ENCODE measurements at regions of chr7 and their contacts with region 1.

Region 1: GRCh38 chr7:76314042-76314721 is 11.7 kb downstream of the HSPB1 start:
- DNase-seq: peak; percentile 99
- ATAC-seq: peak; percentile 57
- H3K4me3 Mint-ChIP-seq: peak overlapping the region; percentile 25
- H3K27ac Mint-ChIP-seq: peak overlapping the region; percentile 82
- H3K4me1 Mint-ChIP-seq: peaks cover 18% of the 10 kb centered on the region
- H3K27me3 Mint-ChIP-seq: no peaks in the 10 kb centered on the region

Region 2: DNA sequence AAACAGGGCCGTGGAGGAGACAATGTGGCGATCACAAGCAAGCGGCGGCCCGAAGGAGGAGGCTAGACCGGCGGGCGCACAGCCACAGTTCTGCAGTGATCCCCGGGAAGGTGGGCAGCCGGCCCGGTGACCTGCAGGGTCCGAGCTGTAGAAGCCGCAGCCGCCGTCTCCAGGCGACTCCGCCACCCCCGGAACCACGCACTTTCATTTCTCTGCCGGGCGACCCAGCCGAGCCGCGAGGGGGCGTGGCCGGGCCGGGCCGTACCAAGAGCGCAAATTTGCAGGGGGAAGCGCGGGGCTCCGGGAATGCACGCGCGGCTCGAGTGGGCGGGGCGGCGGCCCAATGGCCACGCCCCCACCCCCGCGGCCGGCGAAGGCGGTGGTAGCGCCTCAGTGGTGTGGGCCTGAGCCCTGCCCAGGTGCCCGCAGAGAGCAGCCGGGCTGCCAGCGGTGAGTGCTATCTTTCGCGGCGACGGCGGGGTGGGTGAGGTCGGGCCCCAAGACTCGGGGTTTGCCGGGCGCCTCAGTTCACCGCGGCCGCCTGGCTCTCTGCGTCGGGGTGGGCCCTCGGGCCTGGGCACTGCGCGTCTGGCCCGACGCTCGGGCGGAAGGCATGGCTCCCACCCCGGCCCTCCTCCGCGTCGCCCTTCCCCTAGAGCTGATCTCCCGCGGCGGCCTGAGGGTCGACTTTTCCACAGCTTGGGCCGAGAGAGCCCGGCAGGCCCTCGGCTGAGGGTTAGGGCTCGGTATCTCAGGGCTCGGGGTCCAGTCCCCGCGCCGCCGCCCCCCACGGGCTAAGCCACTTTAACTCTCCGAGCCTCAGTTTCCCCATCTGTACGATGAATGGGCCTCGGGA is 399.2 kb before region 1 on chr7 and contains the start of gene POR:
- CTCF ChIA-PET with region 1: no interaction called
- POLR2A ChIA-PET with region 1: no interaction called
- intact Hi-C with region 1: loop called in 1 of 2 experiments (anchors 1 kb)
- DNase-seq: peak; percentile 97
- ATAC-seq: peak; percentile 89
- H3K4me3 Mint-ChIP-seq: peak within 1 kb of the TSS; percentile 80
- H3K27ac Mint-ChIP-seq: peak within 1 kb of the TSS; percentile 81
- H3K4me1 Mint-ChIP-seq: peaks cover 27% of the 10 kb centered on the region
- H3K27me3 Mint-ChIP-seq: no peaks in the 10 kb centered on the region
- total RNA-seq, gene POR: 24.9 to 33.8 TPM

Region 3: DNA sequence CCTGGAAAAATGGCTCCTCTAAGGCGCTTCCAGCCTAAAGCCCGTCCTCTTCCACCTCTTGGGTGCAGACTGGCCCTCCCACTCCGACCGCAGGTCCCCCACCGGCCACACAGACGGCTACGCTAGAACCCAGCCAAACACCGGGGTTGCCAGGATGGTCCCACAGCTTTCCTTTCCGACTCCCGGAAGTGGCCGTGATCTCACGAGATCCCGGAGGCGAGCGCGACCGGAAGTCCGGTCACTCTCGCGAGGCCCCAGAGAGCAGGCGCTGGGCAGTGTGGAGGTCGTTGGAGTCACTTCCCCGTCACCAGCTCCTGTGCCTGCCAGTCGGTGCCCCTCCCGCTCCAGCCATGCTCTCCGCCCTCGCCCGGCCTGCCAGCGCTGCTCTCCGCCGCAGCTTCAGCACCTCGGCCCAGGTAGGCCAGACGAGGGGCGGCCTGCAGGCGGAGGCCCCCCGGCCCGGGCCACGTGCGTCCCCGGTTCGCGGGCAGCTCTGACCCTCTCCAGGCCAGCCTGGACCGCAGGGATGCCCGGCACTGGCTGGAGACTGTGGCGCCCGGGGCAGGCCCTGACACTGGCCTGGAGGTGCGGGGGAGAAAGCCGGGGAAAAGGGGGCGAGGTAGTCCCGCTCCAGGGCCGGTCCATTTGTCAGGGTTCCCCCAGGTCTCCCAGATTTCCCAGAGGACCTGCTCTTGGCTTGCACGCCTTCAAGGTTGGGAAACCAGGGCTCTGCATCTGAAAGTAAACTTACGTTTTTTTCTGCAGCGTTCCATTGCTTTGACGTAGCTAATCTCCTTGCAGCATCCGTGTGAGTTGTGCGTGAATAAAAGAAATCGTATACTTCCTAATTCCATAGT is 266.1 kb before region 1 on chr7 and contains the starts of genes MDH2 and STYXL1:
- CTCF ChIA-PET with region 1: no interaction called
- POLR2A ChIA-PET with region 1: no interaction called
- intact Hi-C with region 1: loop called (anchors 1 to 5 kb)
- DNase-seq: peak; percentile 95
- ATAC-seq: peak; percentile 96
- H3K4me3 Mint-ChIP-seq: peak within 1 kb of the TSS; percentile 92
- H3K27ac Mint-ChIP-seq: peak within 1 kb of the TSS; percentile 97
- H3K4me1 Mint-ChIP-seq: peaks cover 43% of the 10 kb centered on the region
- H3K27me3 Mint-ChIP-seq: no peaks in the 10 kb centered on the region
- total RNA-seq, gene MDH2: 257 to 328 TPM
- total RNA-seq, gene STYXL1: 47.5 to 50.5 TPM

Region 4: DNA sequence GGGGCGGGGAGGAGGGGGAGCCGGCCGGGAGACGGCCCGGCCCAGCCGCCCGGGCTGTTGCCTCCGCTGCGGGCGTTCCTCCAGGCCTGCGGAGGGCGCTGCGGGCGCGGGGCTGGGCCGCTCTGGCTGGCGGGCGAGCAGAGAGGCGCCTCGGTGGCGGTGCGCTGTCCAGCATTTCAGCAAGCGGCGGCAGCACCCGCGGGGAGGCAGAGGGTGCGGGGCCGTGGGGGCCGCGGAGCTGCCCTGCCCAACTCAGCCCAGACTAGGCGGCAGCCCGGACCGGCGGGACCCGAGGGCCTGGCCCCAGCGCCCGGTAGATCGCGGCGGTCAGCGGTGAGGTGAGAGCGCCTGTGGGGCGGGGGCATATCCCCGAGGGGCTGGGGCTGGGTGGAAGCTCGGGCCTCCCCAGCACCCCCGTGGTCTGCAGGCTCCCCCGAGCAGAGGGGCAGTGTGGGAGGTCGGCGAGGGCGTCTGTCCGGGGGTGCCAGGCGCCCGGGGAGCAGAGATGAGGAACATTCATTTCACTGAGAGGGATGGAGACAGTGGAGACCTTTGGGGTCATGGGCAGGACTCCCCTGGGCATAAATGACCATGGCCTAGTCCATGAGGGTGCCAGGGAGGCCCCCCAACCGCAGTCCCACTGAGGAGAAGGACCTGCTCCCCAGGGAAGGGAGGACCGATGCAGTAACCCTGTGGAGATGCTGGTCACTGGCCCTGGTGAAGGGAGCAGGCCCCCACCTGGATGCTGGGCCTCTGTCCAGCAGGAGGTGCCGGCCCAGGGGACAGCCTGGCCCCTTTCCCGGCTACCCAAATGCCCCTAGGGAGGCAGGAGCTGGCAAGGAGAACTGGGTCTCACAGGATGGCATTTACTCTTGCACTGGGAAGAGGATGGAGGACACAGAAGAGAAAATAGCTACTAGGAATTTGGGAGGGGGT is 112.2 kb before region 1 on chr7 and contains the start of gene SRRM3:
- CTCF ChIA-PET with region 1: interaction called, 4 read pairs
- POLR2A ChIA-PET with region 1: no interaction called
- intact Hi-C with region 1: loop called in 1 of 2 experiments (anchors 1 kb)
- DNase-seq: peak; percentile 92
- ATAC-seq: peak; percentile 92
- H3K4me3 Mint-ChIP-seq: no peak within 1 kb of the TSS
- H3K27ac Mint-ChIP-seq: no peak within 1 kb of the TSS
- H3K4me1 Mint-ChIP-seq: no peaks in the 10 kb centered on the region
- H3K27me3 Mint-ChIP-seq: peaks cover 14% of the 10 kb centered on the region
- total RNA-seq, gene SRRM3: 0.09 TPM in 1 of 2 experiments, not detected in the other

Region 5: DNA sequence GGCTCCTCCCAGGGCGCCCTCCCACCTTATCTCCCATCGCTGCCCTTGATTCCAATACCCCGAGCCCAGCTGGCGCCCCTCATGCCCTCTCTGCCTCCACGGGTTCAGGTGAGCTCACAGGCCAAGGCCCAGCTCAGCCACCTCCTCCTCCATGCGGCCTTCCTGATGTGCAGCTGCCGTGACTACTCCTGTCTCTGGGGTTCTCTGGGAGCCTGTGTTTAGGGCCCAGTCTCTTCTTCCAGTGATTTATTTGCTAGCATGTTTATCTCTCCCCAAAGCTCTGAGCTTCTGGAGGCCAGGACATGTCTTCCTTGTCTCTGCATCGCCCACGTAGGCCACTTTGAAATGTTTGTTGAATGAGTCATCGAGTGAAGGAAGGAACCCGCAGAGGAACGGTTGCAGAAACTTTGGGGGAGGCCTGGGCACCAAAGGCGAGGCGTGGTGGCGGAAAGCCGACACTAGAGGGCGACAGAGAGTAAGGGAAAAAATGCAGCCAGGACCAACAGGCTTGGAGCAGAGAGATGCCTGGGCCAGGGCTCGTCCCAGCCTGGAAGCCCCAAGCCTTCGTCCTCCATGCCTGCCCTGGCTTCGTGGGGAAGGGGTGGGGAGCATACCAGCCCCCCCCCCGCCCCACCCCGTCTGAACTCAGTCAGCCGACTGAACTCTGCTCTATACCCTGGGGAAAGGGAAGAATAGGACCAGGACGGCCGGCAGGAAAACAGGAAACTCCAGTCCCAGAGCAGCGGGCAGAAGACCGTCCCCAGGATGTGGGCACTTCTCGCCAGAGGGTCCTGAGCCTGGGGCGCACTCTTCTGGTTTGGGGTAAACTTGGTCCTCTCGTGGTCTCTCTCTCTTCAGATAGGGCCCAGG is 22.6 kb before region 1 on chr7:
- CTCF ChIA-PET with region 1: interaction called, 42 read pairs
- POLR2A ChIA-PET with region 1: interaction called, 5 read pairs
- intact Hi-C with region 1: loop called (anchors 1 kb)
- DNase-seq: peak; percentile 94
- ATAC-seq: peak; percentile 96
- H3K4me3 Mint-ChIP-seq: peak overlapping the region; percentile 20
- H3K27ac Mint-ChIP-seq: peak overlapping the region; percentile 94
- H3K4me1 Mint-ChIP-seq: peaks cover 12% of the 10 kb centered on the region
- H3K27me3 Mint-ChIP-seq: peaks cover 2% of the 10 kb centered on the region

Region 6: GRCh38 chr7:76359111-76359978 is 45.2 kb after region 1 on chr7:
- CTCF ChIA-PET with region 1: interaction called, 5 read pairs
- POLR2A ChIA-PET with region 1: interaction called, 9 read pairs
- intact Hi-C with region 1: loop called (anchors 1 kb)
- DNase-seq: peak; percentile 98
- ATAC-seq: peak; percentile 96
- H3K4me3 Mint-ChIP-seq: peak overlapping the region; percentile 99
- H3K27ac Mint-ChIP-seq: peak overlapping the region; percentile 96
- H3K4me1 Mint-ChIP-seq: peaks cover 41% of the 10 kb centered on the region
- H3K27me3 Mint-ChIP-seq: no peaks in the 10 kb centered on the region